Prostate gland (tissue), 2 donors: ENCODE measurements at regions of chr2 and their contacts with region 1.

Region 1: DNA sequence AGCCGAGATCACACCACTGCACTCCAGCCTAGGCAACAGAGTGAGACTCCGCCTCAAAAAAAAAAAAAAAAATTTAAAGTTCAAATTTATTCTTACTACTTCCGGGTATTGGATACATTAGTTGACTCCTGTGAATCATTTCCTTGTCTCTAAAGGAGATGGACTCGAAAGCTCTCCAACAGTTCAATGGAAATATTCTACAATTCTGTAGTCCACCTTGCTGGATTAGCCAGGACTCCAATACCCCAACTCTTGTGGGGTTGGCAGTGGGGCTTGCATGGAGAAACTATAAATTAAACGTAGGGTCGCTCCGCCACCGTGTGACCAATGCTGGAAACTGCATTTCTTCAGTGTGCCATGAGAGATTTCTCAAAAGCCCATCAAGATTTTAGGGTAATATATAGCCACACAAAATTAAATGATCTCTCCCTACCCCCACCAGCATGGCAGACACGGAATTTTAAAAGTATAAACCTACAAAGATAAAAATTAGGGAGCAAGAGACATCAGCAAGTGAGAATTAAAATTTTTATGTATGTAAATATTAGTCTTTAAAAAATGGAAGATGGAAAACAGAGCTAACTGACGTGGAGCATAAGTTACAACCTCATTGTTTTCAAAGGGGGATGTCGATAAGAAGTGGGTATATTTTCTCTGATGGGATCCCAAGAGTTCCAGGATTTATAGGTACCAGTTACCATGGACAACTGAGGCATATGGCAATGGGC is 27.8 kb upstream of the GAREM2 start:
- DNase-seq: peak; percentile 57
- H3K4me3 ChIP-seq: no peak overlapping the region
- H3K27ac ChIP-seq: no peak overlapping the region
- H3K4me1 ChIP-seq: no peaks in the 10 kb centered on the region
- H3K27me3 ChIP-seq: no peaks in the 10 kb centered on the region
- CTCF ChIP-seq: peak; percentile 20 to 81 (median 78)
- POLR2A ChIP-seq: no peak

Region 2: GRCh38 chr2:25618642-25619037 is 526.5 kb before region 1 on chr2:
- intact Hi-C with region 1: no loop called
- DNase-seq: peak; percentile 67
- H3K4me3 ChIP-seq: peak overlapping the region in 1 of 2 donors; percentile 8
- H3K27ac ChIP-seq: peak overlapping the region; percentile 78 to 86
- H3K4me1 ChIP-seq: peaks cover 15% of the 10 kb centered on the region
- H3K27me3 ChIP-seq: no peaks in the 10 kb centered on the region
- CTCF ChIP-seq: no peak
- POLR2A ChIP-seq: no peak

Region 3: DNA sequence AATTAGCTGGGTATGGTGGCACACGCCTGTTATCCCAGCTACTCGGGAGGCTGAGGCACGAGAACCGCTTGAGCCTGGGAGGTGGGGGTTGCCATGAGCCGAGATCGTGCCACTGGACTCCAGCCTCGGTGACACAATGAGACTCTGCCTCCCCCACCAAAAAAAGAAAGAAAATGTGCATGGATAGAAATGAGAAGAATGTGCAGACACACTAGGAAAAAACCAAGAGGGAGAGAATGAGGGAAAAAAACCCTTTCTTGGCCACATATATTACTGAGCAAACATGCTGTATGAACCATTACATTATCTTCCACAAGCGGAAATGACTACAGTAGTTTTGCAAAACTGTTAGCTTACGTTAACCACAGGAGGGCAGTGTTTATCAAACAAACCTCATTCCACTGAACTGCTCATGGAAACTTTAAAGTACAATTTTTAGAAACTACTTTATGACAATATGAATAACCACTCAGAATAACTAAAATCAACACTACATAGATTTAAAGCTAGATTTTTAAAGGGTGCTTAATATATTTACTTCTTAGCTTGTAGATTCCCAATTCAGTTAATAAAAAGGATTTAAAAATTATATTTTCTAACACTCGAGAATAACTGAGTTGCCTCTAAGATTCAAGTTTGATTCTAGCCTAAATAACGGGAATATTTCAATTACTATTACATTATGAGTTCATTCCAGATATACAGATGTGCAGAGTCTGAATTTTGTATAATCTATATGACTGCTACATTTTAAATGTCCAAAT is 293.2 kb before region 1 on chr2:
- intact Hi-C with region 1: loop called (anchors 5 kb)
- DNase-seq: no peak
- H3K4me3 ChIP-seq: no peak overlapping the region
- H3K27ac ChIP-seq: no peak overlapping the region
- H3K4me1 ChIP-seq: no peaks in the 10 kb centered on the region
- H3K27me3 ChIP-seq: no peaks in the 10 kb centered on the region
- CTCF ChIP-seq: peak in 3 of 4 experiments; percentile 71 to 78 (median 74)
- POLR2A ChIP-seq: no peak

Region 4: GRCh38 chr2:25951071-25951547 is 194.0 kb before region 1 on chr2:
- intact Hi-C with region 1: loop called (anchors 5 kb)
- DNase-seq: peak; percentile 64
- H3K4me3 ChIP-seq: no peak overlapping the region
- H3K27ac ChIP-seq: no peak overlapping the region
- H3K4me1 ChIP-seq: no peaks in the 10 kb centered on the region
- H3K27me3 ChIP-seq: no peaks in the 10 kb centered on the region
- CTCF ChIP-seq: peak; percentile 65 to 91 (median 86)
- POLR2A ChIP-seq: no peak

Region 5: DNA sequence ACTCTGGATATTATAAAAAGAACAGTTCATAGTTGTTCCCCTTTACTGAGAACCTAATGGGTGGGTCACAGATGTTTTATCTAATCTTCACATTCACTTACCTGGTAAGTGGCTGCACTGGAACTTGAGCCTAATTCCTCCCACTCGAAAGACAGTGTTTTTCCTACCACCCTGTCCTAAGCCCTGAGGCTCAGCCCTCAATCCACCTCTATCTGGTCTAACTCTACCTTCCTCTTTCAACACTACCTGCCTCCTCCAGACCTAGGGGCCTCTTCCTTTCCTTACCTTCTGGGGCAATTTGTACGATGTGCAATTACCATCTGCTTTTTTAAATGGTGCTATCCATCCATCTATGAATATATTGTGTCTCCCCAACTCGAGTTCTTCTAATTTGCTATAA is 153.2 kb before region 1 on chr2:
- intact Hi-C with region 1: loop called (anchors 5 kb)
- DNase-seq: no peak
- H3K4me3 ChIP-seq: no peak overlapping the region
- H3K27ac ChIP-seq: no peak overlapping the region
- H3K4me1 ChIP-seq: no peaks in the 10 kb centered on the region
- H3K27me3 ChIP-seq: no peaks in the 10 kb centered on the region
- CTCF ChIP-seq: no peak
- POLR2A ChIP-seq: no peak

Region 6: DNA sequence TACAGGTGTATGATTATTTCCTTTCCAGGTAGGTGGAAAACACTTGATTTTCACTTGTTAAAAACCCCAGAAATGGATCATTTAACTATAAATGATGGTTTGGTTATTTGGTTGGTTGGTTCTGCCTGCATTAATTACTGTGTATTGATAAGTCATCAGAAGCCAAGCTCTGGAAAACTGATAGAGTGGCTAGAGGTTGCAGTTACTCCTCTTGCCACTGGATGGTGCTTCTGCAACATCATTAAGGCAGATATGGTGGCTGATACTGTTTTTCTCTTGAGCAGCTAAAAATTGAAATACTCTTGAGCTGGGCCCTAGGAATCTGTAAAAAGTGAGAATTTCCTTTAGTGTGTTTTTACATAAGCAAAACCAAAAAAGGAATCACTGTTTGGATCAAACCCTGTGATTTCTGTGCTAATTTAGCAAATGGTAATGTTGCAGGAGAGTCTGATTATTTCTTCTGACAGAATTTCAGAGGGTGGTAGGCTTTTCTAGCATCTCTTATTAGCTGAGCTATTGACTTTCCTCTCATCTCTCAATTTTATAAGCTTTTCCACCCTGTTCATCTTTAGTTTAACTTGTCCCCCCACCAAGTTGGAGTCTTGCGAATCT is 57.0 kb before region 1 on chr2:
- intact Hi-C with region 1: loop called (anchors 5 kb)
- DNase-seq: no peak
- H3K4me3 ChIP-seq: no peak overlapping the region
- H3K27ac ChIP-seq: no peak overlapping the region
- H3K4me1 ChIP-seq: no peaks in the 10 kb centered on the region
- H3K27me3 ChIP-seq: no peaks in the 10 kb centered on the region
- CTCF ChIP-seq: peak in 3 of 4 experiments; percentile 50 to 70 (median 64)
- POLR2A ChIP-seq: no peak